Naive thymus-derived CD4-positive, alpha-beta T cell (primary cell): ENCODE measurements at regions of chr20 and their contacts with region 1.

Region 1: GRCh38 chr20:38748097-38748860 is at the start of gene ACTR5:
- DNase-seq: peak; percentile 95 to 99 (median 98)
- ATAC-seq: peak; percentile 96
- H3K4me3 ChIP-seq: peak within 1 kb of the TSS; percentile 72
- H3K4me3 Mint-ChIP-seq: peak within 1 kb of the TSS; percentile 95 to 99 (median 97)
- H3K27ac ChIP-seq: peak within 1 kb of the TSS; percentile 95
- H3K27ac Mint-ChIP-seq: peak within 1 kb of the TSS; percentile 93 to 100 (median 99)
- H3K4me1 ChIP-seq: peaks cover 12 to 13% of the 10 kb centered on the region in 2 donors
- H3K4me1 Mint-ChIP-seq: peaks cover 11 to 40% (median 22%) of the 10 kb centered on the region in 7 donors
- H3K27me3 ChIP-seq: no peaks in the 10 kb centered on the region
- H3K27me3 Mint-ChIP-seq: peaks cover 4 to 13% (median 5%) of the 10 kb centered on the region in 5 donors
- total RNA-seq, gene ACTR5: 8.9 to 20.8 (median 15.2) TPM

Region 2: GRCh38 chr20:38633577-38634093 is 114.6 kb before region 1 on chr20:
- CTCF ChIA-PET with region 1: interaction called, 3 read pairs
- POLR2A ChIA-PET with region 1: interaction called, 4 read pairs
- intact Hi-C with region 1: loop called (anchors 1 to 5 kb)
- DNase-seq: peak; percentile 6 to 56 (median 40)
- ATAC-seq: peak; percentile 84
- H3K4me3 ChIP-seq: no peak overlapping the region
- H3K4me3 Mint-ChIP-seq: no peak overlapping the region
- H3K27ac ChIP-seq: no peak overlapping the region
- H3K27ac Mint-ChIP-seq: no peak overlapping the region
- H3K4me1 ChIP-seq: no peaks in the 10 kb centered on the region
- H3K4me1 Mint-ChIP-seq: peaks cover 0 to 7% (median 5%) of the 10 kb centered on the region in 7 donors
- H3K27me3 ChIP-seq: no peaks in the 10 kb centered on the region
- H3K27me3 Mint-ChIP-seq: peaks cover 11 to 24% (median 18%) of the 10 kb centered on the region in 5 donors

Region 3: GRCh38 chr20:38674092-38674764 is 74.1 kb before region 1 on chr20:
- CTCF ChIA-PET with region 1: no interaction called
- POLR2A ChIA-PET with region 1: no interaction called
- intact Hi-C with region 1: loop called in 1 of 2 experiments (anchors 1 kb)
- DNase-seq: peak in 7 of 9 donors; percentile 15 to 61 (median 24)
- ATAC-seq: peak; percentile 90
- H3K4me3 ChIP-seq: peak overlapping the region; percentile 61
- H3K4me3 Mint-ChIP-seq: peak overlapping the region; percentile 64 to 91 (median 83)
- H3K27ac ChIP-seq: no peak overlapping the region
- H3K27ac Mint-ChIP-seq: peak overlapping the region in 1 of 9 donors; percentile 70
- H3K4me1 ChIP-seq: peaks cover 6 to 9% of the 10 kb centered on the region in 2 donors
- H3K4me1 Mint-ChIP-seq: peaks cover 6 to 17% (median 9%) of the 10 kb centered on the region in 7 donors
- H3K27me3 ChIP-seq: peaks cover 4 to 22% of the 10 kb centered on the region in 2 donors
- H3K27me3 Mint-ChIP-seq: peaks cover 13 to 60% (median 51%) of the 10 kb centered on the region in 5 donors

Region 4: GRCh38 chr20:38730989-38731737 is 17.1 kb before region 1 on chr20:
- CTCF ChIA-PET with region 1: interaction called, 4 read pairs
- POLR2A ChIA-PET with region 1: interaction called, 3 read pairs
- intact Hi-C with region 1: loop called (anchors 1 kb)
- DNase-seq: peak; percentile 53 to 84 (median 70)
- ATAC-seq: peak; percentile 87
- H3K4me3 ChIP-seq: peak overlapping the region; percentile 63
- H3K4me3 Mint-ChIP-seq: peak overlapping the region; percentile 65 to 86 (median 77)
- H3K27ac ChIP-seq: no peak overlapping the region
- H3K27ac Mint-ChIP-seq: peak overlapping the region in 6 of 9 donors; percentile 6 to 80 (median 44)
- H3K4me1 ChIP-seq: peaks cover 24 to 32% of the 10 kb centered on the region in 2 donors
- H3K4me1 Mint-ChIP-seq: peaks cover 32 to 52% (median 44%) of the 10 kb centered on the region in 7 donors
- H3K27me3 ChIP-seq: peaks cover 39 to 41% of the 10 kb centered on the region in 2 donors
- H3K27me3 Mint-ChIP-seq: peaks cover 89 to 96% (median 92%) of the 10 kb centered on the region in 5 donors

Region 5: DNA sequence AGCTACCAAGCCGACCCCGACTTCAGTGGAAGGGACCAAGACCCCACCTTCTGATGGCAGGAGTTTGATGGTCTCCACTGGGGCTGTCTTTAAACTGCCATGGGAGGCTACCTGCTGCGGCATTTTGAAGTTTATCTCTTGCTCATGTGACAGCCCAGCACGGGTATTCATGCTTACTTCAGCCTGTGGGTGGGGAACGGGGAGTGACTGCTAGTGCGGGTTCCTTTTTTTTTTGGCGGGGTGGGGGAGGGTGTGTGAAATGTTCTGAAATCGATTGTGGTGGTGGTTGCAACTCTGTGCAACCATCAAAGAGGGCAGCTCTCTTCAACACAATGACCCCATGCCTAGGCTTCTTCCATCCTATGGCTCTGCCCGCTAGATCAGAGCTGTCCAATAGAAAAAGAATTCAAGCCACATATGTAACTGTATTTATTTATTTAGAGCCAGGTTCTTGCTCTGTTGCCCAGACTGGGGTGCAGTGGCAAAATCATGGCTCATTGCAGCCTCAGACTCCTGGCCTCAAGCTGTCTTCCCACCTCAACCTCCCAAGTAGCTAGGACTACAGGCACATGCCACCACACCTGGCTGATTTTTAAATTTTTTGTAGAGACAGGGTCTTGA is 110.9 kb after region 1 on chr20:
- CTCF ChIA-PET with region 1: no interaction called
- POLR2A ChIA-PET with region 1: no interaction called
- intact Hi-C with region 1: no loop called
- DNase-seq: no peak
- ATAC-seq: peak; percentile 77
- H3K4me3 ChIP-seq: no peak overlapping the region
- H3K4me3 Mint-ChIP-seq: peak overlapping the region in 3 of 10 donors; percentile 23 to 47 (median 45)
- H3K27ac ChIP-seq: no peak overlapping the region
- H3K27ac Mint-ChIP-seq: peak overlapping the region in 7 of 9 donors; percentile 28 to 78 (median 59)
- H3K4me1 ChIP-seq: peaks cover 32 to 53% of the 10 kb centered on the region in 2 donors
- H3K4me1 Mint-ChIP-seq: peaks cover 46 to 88% (median 64%) of the 10 kb centered on the region in 7 donors
- H3K27me3 ChIP-seq: no peaks in the 10 kb centered on the region
- H3K27me3 Mint-ChIP-seq: no peaks in the 10 kb centered on the region

Region 6: GRCh38 chr20:38893565-38894090 is 145.3 kb after region 1 on chr20:
- CTCF ChIA-PET with region 1: interaction called, 23 read pairs
- POLR2A ChIA-PET with region 1: interaction called, 3 read pairs
- intact Hi-C with region 1: loop called (anchors 2 kb)
- DNase-seq: peak; percentile 59 to 85 (median 77)
- ATAC-seq: peak; percentile 92
- H3K4me3 ChIP-seq: peak overlapping the region; percentile 33
- H3K4me3 Mint-ChIP-seq: peak overlapping the region in 8 of 10 donors; percentile 5 to 64 (median 43)
- H3K27ac ChIP-seq: peak overlapping the region; percentile 42
- H3K27ac Mint-ChIP-seq: peak overlapping the region; percentile 14 to 94 (median 70)
- H3K4me1 ChIP-seq: peaks cover 7 to 10% of the 10 kb centered on the region in 2 donors
- H3K4me1 Mint-ChIP-seq: peaks cover 21 to 52% (median 29%) of the 10 kb centered on the region in 7 donors
- H3K27me3 ChIP-seq: no peaks in the 10 kb centered on the region
- H3K27me3 Mint-ChIP-seq: no peaks in the 10 kb centered on the region

Region 7: DNA sequence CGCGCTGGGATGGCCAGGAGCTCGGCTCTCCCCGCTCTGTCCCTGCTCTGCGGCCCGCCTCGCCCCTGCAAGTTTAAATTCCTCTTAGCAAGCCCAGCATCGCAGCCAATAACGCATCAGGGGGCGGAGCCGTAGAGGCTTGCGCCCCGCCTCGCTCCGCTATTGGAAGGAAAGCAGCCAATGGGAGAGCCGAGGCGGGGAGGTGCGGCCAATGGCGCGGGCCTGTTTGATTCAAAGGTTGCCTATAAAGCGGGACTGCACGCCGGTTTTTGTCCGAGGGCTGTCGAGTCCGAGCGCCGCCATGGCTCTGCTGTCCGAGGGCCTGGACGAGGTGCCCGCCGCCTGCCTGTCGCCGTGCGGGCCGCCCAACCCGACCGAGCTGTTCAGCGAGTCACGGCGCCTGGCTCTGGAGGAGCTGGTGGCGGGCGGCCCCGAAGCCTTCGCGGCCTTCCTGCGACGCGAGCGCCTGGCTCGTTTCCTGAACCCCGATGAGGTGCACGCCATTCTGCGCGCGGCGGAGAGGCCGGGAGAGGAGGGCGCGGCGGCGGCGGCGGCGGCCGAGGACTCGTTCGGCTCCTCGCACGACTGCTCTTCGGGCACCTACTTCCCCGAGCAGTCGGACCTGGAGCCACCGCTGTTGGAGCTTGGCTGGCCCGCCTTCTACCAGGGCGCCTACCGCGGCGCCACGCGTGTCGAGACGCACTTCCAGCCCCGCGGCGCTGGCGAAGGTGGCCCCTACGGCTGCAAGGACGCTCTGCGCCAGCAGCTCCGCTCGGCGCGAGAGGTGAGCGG is 178.1 kb after region 1 on chr20 and contains the start of gene FAM83D:
- CTCF ChIA-PET with region 1: interaction called, 3 read pairs
- POLR2A ChIA-PET with region 1: no interaction called
- intact Hi-C with region 1: loop called (anchors 1 kb)
- DNase-seq: peak; percentile 86 to 98 (median 92)
- ATAC-seq: peak; percentile 97
- H3K4me3 ChIP-seq: peak within 1 kb of the TSS; percentile 61
- H3K4me3 Mint-ChIP-seq: peak within 1 kb of the TSS; percentile 76 to 90 (median 80)
- H3K27ac ChIP-seq: peak within 1 kb of the TSS; percentile 64
- H3K27ac Mint-ChIP-seq: peak within 1 kb of the TSS in 8 of 9 donors; percentile 27 to 83 (median 72)
- H3K4me1 ChIP-seq: peaks cover 5 to 22% of the 10 kb centered on the region in 2 donors
- H3K4me1 Mint-ChIP-seq: peaks cover 6 to 43% (median 17%) of the 10 kb centered on the region in 7 donors
- H3K27me3 ChIP-seq: no peaks in the 10 kb centered on the region
- H3K27me3 Mint-ChIP-seq: no peaks in the 10 kb centered on the region
- total RNA-seq, gene FAM83D: 1.4 to 11.1 (median 1.8) TPM

Region 8: GRCh38 chr20:38962044-38962927 is 214.0 kb after region 1 on chr20 and contains the start of gene DHX35:
- CTCF ChIA-PET with region 1: interaction called, 3 read pairs
- POLR2A ChIA-PET with region 1: interaction called, 17 read pairs
- intact Hi-C with region 1: loop called (anchors 1 kb)
- DNase-seq: peak; percentile 96 to 99 (median 98)
- ATAC-seq: peak; percentile 100
- H3K4me3 ChIP-seq: peak within 1 kb of the TSS; percentile 97
- H3K4me3 Mint-ChIP-seq: peak within 1 kb of the TSS; percentile 92 to 97 (median 96)
- H3K27ac ChIP-seq: peak within 1 kb of the TSS; percentile 80
- H3K27ac Mint-ChIP-seq: peak within 1 kb of the TSS; percentile 92 to 98 (median 96)
- H3K4me1 ChIP-seq: peaks cover 6 to 16% of the 10 kb centered on the region in 2 donors
- H3K4me1 Mint-ChIP-seq: peaks cover 16 to 46% (median 34%) of the 10 kb centered on the region in 7 donors
- H3K27me3 ChIP-seq: no peaks in the 10 kb centered on the region
- H3K27me3 Mint-ChIP-seq: no peaks in the 10 kb centered on the region
- total RNA-seq, gene DHX35: 8.0 to 13.3 (median 10.6) TPM